Endothelial cell of umbilical vein (primary cell): ENCODE measurements at regions of chr9 and their contacts with region 1.

Region 1: DNA sequence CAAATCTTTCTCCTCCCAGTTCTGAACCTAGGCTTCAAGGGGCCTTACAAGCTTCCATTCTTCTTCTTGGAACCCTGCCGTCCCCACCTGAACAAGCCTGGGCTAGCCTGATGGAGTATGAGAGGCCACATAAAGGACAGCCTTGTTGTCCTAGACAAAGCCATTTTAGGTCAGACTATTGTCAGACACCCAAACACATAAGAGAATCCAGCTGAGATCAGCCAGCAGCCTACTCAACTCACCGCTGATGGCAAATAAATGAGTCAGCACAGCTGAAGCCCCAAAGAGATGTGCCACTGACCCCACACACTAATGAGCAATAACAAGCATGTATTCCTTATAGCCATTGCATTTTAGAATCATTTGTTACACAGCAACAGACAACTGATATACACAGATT is 33.8 kb downstream of the SVEP1 start:
- DNase-seq: no peak
- H3K4me3 ChIP-seq: no peak overlapping the region
- H3K27ac ChIP-seq: no peak overlapping the region
- H3K4me1 ChIP-seq: no peaks in the 10 kb centered on the region
- H3K27me3 ChIP-seq: no peaks in the 10 kb centered on the region
- CTCF ChIP-seq: no peak
- POLR2A ChIP-seq: no peak

Region 2: DNA sequence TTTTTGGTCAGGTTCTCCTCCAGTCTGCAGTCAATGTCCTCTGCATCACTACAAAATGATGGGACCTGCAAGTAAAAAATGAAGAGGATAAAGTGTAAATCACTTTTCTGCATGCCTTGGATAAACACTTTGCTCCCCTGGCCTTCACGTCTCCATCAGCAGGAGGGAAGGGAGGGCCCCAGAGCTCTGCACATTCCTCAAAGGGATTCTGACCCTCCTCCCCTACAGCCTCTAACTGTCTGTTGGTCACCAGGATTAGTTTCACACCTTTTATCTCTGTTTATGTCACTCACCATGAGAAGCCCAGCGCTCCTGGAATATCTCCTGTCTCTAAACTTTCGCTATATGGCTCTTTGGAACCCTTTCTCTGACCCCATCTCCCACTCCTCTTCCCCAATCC is 69.5 kb before region 1 on chr9:
- CTCF ChIA-PET with region 1: no interaction called
- POLR2A ChIA-PET with region 1: no interaction called
- dilution Hi-C with region 1: no loop called
- intact Hi-C with region 1: no loop called
- DNase-seq: no peak
- H3K4me3 ChIP-seq: no peak overlapping the region
- H3K27ac ChIP-seq: no peak overlapping the region
- H3K4me1 ChIP-seq: no peaks in the 10 kb centered on the region
- H3K27me3 ChIP-seq: no peaks in the 10 kb centered on the region
- CTCF ChIP-seq: no peak
- POLR2A ChIP-seq: no peak

Region 3: DNA sequence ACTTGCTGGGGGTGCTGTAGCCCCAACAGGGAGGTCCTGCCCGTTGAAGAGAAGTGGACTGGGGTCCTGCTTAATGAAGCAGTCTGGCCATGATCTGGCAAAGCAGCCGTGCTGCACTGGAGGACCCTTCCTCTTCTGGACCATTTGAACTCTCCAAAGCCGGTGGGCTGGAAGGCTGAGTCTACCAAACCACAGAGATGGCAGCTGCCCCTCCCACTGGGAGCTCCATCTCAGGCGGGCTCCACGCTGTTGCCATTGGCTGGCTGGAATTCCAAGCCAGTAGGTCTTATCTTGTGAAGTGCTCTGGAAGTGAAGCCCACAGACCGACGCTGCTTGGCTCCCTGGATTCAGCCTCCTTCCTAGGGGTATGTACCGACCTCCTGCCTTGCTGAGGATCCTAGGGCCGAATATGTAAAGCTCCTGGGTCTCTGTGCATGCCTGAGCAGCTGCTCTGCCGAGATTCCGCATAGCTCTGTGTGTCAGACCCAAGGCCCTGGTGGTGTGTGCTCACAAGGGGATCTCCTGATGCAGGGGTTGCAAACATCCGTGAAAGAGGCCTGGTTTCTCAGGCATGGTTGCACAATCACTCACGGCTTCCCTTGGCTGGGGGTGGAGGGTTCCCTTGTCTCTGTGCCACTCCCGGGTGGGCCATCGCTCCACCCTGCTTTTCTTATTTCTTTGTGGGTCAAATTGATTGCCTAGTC is 53.6 kb after region 1 on chr9:
- CTCF ChIA-PET with region 1: no interaction called
- POLR2A ChIA-PET with region 1: no interaction called
- dilution Hi-C with region 1: no loop called
- intact Hi-C with region 1: loop called (anchors 5 kb)
- DNase-seq: no peak
- H3K4me3 ChIP-seq: no peak overlapping the region
- H3K27ac ChIP-seq: no peak overlapping the region
- H3K4me1 ChIP-seq: no peaks in the 10 kb centered on the region
- H3K27me3 ChIP-seq: no peaks in the 10 kb centered on the region
- CTCF ChIP-seq: no peak
- POLR2A ChIP-seq: no peak